ENCODE measurements at regions of chr2 and their contacts with region 1.

Region 1: GRCh38 chr2:1715184-1716013 is 28.9 kb downstream of the PXDN start:
- DNase-seq: peak; percentile 91
- H3K4me3 ChIP-seq: peak overlapping the region in 1 of 2 experiments; percentile 3; a peak in 1 of 4 replicates
- H3K27ac ChIP-seq: peak overlapping the region; percentile 81 to 100
- H3K4me1 ChIP-seq: peaks cover 16 to 75% of the 10 kb centered on the region in 2 experiments
- H3K27me3 ChIP-seq: no peaks in the 10 kb centered on the region
- CTCF ChIP-seq: no peak
- EP300 ChIP-seq: peak; percentile 20 to 92; a peak in 3 of 4 replicates
- RAD21 ChIP-seq: peak; percentile 54

Region 2: DNA sequence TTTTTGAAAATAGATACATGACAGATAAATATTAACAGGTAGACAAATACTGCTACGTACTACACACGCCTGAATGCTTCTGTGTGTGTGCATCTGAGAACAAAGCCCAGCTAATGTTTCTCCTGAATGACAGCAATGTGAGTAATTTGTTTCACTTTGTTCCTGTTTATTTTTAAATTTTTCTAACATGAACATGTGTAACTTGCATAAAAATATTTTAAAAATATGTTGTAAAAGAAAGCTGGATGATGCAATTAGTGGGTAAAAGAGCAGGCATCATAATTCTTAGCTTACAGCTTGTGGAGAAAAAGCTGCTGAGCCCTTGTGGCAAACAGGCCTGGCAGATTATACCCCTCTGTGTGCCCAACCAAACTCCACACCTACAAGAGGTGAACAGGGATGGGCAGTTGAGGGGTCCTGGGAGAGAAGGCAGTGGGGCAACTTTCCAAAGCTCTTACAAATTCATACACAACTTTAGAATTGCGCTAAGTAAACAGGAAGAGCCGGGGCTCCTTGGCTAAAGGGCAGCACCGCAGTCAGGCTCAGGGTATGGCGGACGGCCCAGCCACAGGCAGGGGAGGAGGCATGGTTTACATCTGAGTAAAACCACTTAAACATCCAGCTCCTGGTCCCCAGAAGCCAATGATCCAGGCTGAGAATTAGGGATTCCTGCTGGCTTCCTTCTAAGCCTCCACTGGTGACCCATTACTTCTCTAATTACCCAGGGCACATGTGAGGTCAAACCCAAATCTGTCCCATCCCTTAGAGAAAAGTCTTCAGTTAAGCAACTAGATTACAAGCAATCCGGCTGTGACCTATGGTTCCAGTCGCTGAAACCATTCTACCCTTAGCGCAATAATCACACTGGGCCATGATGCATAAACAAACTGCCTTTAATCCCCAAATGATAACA is 14.9 kb after region 1 on chr2:
- CTCF ChIA-PET with region 1: interaction called, 10 read pairs
- POLR2A ChIA-PET with region 1: interaction called, 15 read pairs
- DNase-seq: peak; percentile 64
- H3K4me3 ChIP-seq: peak overlapping the region; percentile 19 to 45; a peak in 3 of 4 replicates
- H3K27ac ChIP-seq: peak overlapping the region; percentile 98 to 100
- H3K4me1 ChIP-seq: peaks cover 47 to 62% of the 10 kb centered on the region in 2 experiments
- H3K27me3 ChIP-seq: no peaks in the 10 kb centered on the region
- CTCF ChIP-seq: no peak
- EP300 ChIP-seq: peak in 1 of 2 experiments; percentile 47; a peak in 2 of 4 replicates
- RAD21 ChIP-seq: peak; percentile 17

Region 3: DNA sequence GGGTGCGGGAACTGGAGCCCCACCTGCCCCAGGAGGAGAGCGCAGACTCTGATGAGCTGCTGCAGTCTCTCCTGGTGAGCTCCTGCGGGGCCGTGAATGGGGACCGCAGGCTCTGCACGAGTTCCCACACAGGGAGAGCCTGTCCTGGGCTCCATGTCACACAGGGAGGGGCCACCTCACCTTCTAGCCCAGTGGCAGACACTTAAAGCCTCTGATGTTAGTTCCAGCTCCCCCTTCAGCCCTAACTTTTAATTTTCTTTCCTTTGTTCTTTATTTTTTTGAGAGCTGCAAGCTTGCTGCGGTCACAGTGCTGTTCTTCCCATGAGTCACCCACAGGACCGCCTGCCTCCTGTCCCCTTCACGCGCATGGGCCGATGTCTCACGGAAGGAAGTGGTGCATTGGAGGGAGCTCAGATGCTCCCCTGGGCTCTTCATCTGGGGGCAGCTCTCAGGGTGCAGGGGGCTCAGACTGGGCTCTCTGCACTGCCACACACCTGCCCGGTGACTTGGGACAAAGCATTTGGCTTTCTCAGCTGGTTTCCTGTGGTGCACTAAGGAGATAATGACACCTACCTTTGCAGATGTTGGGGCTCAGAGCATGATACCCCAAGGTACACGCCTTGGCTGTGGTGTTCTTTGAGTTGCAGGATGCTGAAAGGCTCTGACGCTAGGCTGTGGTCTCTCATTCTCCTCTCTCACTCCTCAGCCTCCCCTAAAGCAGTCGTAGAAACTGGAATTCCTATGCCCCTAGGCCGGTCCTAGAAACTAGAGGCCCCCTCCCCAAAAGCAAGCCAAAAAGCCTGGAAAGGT is 66.1 kb after region 1 on chr2:
- CTCF ChIA-PET with region 1: no interaction called
- POLR2A ChIA-PET with region 1: no interaction called
- DNase-seq: no peak
- H3K4me3 ChIP-seq: no peak overlapping the region
- H3K27ac ChIP-seq: no peak overlapping the region
- H3K4me1 ChIP-seq: no peaks in the 10 kb centered on the region; a peak in 1 of 4 replicates
- H3K27me3 ChIP-seq: 0 out of 2 replicates have a peak, but pooled peaks cover 10% of the 10 kb centered on the region
- CTCF ChIP-seq: no peak
- EP300 ChIP-seq: no peak
- RAD21 ChIP-seq: no peak

Region 4: DNA sequence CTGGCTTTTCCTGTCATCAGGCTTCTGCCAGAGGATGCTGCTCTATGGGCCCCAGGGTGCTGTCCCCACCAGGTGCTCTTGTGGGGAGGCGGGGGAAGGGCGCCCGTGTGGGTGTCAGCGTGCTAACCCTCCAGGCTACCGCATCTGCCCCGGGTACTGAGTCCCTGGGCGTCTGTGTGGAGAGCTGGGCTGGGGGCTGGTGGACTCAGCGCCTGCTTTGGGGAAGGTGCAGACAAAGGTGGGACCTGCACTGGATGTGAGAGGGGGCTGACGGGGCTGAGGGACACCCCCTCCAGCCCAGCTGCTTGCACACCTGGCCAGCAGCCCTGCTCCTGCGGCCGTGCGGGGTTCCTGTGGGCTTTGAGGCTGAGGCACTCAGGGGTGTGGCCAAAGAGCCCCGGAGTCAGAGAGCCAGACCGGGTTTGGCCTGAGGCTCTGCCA is 149.6 kb after region 1 on chr2:
- CTCF ChIA-PET with region 1: no interaction called
- POLR2A ChIA-PET with region 1: no interaction called
- DNase-seq: no peak
- H3K4me3 ChIP-seq: no peak overlapping the region
- H3K27ac ChIP-seq: no peak overlapping the region
- H3K4me1 ChIP-seq: peaks cover 0 to 49% of the 10 kb centered on the region in 2 experiments; a peak in 3 of 4 replicates
- H3K27me3 ChIP-seq: peaks cover 15% of the 10 kb centered on the region
- CTCF ChIP-seq: no peak
- EP300 ChIP-seq: no peak
- RAD21 ChIP-seq: no peak